ENCODE measurements at regions of chr3 and their contacts with region 1.

Region 1: DNA sequence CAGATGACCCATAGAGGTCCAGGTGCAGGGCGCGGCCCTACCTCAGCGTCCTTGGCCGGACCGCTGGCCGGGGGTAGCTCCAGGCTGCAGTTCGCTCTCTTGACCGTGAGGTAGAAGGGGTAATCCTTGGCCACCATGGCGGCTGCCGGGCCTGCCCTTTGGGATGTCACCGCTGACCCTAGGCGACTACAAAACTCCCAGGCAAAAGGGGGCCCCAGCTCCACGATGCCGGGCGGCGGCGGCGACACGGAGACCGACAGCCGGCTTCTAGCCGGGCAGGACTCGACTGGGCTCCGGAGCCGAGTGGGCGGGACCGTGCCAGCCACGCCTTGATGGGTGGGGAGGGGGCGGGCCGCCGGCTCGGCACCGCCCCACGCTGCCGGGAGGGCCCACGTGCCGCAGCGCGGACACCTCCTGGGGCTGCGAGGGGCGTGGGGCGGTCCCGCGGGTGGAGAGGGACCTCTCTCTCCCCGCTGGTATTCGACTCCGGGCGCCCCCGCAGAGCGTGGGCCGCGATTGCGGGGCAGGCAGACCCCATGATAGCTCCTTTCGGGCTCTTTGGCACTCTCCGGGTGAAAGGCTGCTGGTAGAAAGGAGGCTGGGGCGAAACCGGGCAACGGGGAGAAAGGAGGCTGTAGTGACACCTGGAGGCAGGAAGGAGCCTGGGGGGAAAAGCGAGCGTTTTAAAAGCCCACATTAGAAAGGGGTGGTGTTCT is at the start of gene ARHGEF3:
- DNase-seq: peak; percentile 83
- ATAC-seq: peak; percentile 91
- H3K4me3 Mint-ChIP-seq: peak within 1 kb of the TSS; percentile 80
- H3K27ac Mint-ChIP-seq: no peak within 1 kb of the TSS
- H3K4me1 Mint-ChIP-seq: peaks cover 22% of the 10 kb centered on the region
- H3K27me3 Mint-ChIP-seq: peaks cover 13% of the 10 kb centered on the region
- CTCF ChIP-seq: no peak
- total RNA-seq, gene ARHGEF3: 4.6 to 7.9 TPM (median 7.5 TPM) in 3 replicates

Region 2: GRCh38 chr3:56682462-56683121 is 119.2 kb before region 1 on chr3:
- CTCF ChIA-PET with region 1: interaction called, 10 read pairs
- POLR2A ChIA-PET with region 1: no interaction called
- DNase-seq: peak; percentile 72
- ATAC-seq: peak; percentile 72
- H3K4me3 Mint-ChIP-seq: peak overlapping the region; percentile 84
- H3K27ac Mint-ChIP-seq: peak overlapping the region; percentile 78
- H3K4me1 Mint-ChIP-seq: peaks cover 38% of the 10 kb centered on the region
- H3K27me3 Mint-ChIP-seq: peaks cover 42% of the 10 kb centered on the region
- CTCF ChIP-seq: no peak

Region 3: DNA sequence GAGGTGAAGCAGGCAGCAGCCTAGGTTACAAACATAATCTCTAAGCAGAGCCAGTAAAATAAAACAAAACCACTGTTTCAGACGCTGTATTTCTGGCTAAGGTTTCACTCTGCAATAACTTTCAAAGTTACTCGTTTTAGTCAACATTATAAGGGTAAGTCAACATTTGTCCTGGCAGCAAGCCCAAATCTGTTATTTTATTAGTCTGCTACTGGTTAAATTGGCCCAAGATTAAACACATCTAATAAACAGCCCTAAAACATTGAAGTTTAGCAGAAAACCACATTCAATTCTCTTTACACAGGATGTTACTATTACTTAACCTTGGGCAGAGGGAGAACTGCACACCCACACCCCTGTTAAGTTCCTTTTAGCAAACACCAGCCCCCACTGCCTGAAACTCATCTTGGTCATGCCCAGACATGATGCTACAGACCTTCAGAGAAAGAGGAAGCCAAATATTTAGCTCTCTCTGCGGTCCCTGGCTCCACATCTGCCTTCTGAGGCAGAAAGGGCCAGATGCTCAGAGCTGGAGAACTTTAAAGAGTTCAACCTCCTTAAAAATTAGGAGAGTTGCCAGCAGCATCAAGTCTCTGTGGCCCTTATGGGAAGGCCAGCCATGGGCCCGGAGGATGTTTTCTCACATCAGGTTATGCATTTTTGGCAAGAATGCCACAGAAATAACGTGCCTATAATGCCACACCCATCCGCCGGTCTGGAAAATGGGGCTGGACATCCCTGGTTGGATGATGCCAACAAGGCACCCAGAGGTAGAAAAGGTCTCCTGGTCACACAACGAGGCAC is 18.0 kb before region 1 on chr3:
- CTCF ChIA-PET with region 1: interaction called, 32 read pairs
- POLR2A ChIA-PET with region 1: interaction called, 3 read pairs
- DNase-seq: no peak
- ATAC-seq: no peak
- H3K4me3 Mint-ChIP-seq: no peak overlapping the region
- H3K27ac Mint-ChIP-seq: no peak overlapping the region
- H3K4me1 Mint-ChIP-seq: peaks cover 12% of the 10 kb centered on the region; the same call in 1 of the 2 replicates
- H3K27me3 Mint-ChIP-seq: no peaks in the 10 kb centered on the region
- CTCF ChIP-seq: no peak

Region 4: DNA sequence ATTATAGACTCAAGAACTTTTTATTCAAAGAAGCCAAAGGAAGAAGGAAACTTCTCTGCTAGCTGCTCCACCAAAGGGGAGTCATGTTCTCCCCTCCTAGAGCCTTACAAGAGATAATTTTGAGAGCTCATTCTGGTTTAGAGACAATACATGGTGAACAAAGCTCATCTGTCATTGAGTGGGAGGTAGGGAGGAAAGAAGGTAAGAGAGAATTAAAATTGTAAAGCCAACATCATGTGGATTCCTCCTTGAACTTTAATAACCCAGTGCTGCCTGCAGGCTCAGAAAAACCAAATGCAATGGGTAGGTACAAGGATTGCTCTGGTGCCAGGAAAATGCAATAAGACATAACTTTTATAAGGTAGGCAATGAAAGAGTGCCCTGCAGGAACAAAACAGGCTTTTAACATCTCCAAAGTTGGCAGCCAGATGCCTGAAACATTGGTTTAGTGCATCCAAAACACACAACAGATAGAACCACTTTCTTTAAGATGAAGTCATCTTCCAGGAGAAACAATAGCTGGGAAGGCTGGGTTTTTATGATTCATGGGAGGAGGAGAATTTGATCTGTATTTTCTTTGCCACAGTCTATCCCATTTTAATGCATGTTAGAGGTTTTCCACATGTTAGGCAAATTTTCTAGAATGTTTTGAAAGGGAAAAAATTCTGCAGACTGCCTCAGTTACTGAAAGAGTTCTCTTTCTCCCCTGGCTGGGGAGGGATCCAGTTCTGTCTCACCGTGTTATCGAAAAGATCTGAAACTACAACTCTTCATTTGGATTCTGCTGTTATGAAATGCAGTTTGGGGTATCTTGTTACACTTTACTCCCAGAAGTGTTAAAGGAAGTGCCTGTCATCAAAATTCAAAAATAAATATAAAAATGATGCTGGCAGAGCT is 11.2 kb after region 1 on chr3:
- CTCF ChIA-PET with region 1: interaction called, 25 read pairs
- POLR2A ChIA-PET with region 1: interaction called, 3 read pairs
- DNase-seq: no peak
- ATAC-seq: no peak
- H3K4me3 Mint-ChIP-seq: no peak overlapping the region
- H3K27ac Mint-ChIP-seq: no peak overlapping the region
- H3K4me1 Mint-ChIP-seq: no peaks in the 10 kb centered on the region
- H3K27me3 Mint-ChIP-seq: no peaks in the 10 kb centered on the region
- CTCF ChIP-seq: no peak

Region 5: DNA sequence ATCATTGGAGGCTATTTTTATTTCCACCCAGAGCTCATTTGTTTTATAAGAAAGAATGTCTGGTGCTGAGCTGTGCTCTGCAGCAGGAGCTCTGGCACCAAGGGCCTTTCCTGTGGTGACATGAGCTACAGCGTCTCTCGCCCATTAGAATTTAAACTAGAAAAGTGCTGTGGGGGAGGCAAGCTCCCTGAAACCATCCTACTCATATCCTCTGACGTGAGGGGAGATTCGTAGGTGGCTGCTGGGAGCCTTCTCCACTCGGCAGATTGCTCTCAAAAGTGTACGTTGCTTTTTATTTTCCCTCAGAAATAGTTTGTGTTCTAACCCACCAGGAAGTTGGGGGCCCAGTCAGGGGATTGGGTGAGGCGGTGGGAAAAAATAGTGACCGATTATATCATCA is 76.3 kb after region 1 on chr3:
- CTCF ChIA-PET with region 1: interaction called, 11 read pairs
- POLR2A ChIA-PET with region 1: no interaction called
- DNase-seq: no peak
- ATAC-seq: 0 out of 2 replicates have a peak, but pooled peaks have one; percentile 43
- H3K4me3 Mint-ChIP-seq: no peak overlapping the region
- H3K27ac Mint-ChIP-seq: peak overlapping the region; percentile 64; the same call in 1 of the 2 replicates
- H3K4me1 Mint-ChIP-seq: peaks cover 22% of the 10 kb centered on the region
- H3K27me3 Mint-ChIP-seq: no peaks in the 10 kb centered on the region
- CTCF ChIP-seq: no peak

Region 6: DNA sequence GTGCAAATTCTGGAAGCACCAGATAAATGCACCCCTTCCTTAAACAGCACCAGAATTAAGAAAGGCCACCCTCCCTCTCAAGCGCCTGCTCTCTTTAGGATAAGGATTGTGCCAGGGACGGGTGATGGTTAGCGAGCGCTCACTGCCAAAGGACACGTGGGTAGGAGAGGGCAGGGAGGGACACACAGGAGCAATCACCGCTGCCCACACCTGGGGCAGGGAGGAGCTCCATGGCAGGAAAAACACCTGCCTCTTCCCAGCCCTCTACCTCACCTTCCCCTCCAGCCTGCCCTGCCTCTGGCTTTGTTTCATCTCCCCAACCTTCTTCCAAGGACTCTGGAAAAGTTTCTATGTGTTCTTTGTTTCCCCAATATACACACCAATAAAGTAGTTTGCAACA is 251.3 kb after region 1 on chr3:
- CTCF ChIA-PET with region 1: no interaction called
- POLR2A ChIA-PET with region 1: no interaction called
- DNase-seq: no peak
- ATAC-seq: no peak
- H3K4me3 Mint-ChIP-seq: no peak overlapping the region
- H3K27ac Mint-ChIP-seq: peak overlapping the region; percentile 36; the same call in 1 of the 2 replicates
- H3K4me1 Mint-ChIP-seq: peaks cover 2% of the 10 kb centered on the region; the same call in 1 of the 2 replicates
- H3K27me3 Mint-ChIP-seq: no peaks in the 10 kb centered on the region
- CTCF ChIP-seq: no peak

Measured in WTC11 (cell line).